ENCODE measurements at regions of chr16 and their contacts with region 1.

Region 1: GRCh38 chr16:84084570-84085270 is 32.0 kb downstream of the MBTPS1 start:
- DNase-seq: no peak
- H3K4me3 ChIP-seq: no peak overlapping the region
- H3K27ac ChIP-seq: no peak overlapping the region
- H3K4me1 ChIP-seq: peaks cover 0 to 9% (median 3%) of the 10 kb centered on the region in 3 donors
- H3K27me3 ChIP-seq: no peaks in the 10 kb centered on the region
- CTCF ChIP-seq: peak; percentile 38 to 73 (median 68)
- POLR2A ChIP-seq: no peak

Region 2: DNA sequence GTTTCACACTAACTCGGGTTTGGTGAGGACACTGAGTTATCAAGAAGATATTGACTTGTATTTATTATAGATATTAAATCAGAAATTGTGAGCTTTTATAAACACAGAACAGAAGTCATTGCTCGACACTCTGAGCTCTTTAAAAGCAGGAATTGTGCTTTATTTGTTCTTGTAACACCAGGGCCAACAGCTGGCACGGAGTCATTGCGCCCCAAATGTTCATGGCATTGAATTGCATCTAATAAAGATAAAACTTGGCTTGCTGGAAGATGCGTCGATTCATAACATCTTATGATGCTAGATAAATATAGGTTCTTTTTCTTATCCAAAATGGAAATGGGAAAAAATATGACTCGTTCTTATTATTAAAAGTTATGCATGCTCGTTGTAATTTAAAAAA is 197.6 kb before region 1 on chr16:
- intact Hi-C with region 1: no loop called
- DNase-seq: no peak
- H3K4me3 ChIP-seq: no peak overlapping the region
- H3K27ac ChIP-seq: no peak overlapping the region
- H3K4me1 ChIP-seq: no peaks in the 10 kb centered on the region
- H3K27me3 ChIP-seq: no peaks in the 10 kb centered on the region
- CTCF ChIP-seq: peak in 1 of 6 experiments; percentile 16
- POLR2A ChIP-seq: no peak

Region 3: DNA sequence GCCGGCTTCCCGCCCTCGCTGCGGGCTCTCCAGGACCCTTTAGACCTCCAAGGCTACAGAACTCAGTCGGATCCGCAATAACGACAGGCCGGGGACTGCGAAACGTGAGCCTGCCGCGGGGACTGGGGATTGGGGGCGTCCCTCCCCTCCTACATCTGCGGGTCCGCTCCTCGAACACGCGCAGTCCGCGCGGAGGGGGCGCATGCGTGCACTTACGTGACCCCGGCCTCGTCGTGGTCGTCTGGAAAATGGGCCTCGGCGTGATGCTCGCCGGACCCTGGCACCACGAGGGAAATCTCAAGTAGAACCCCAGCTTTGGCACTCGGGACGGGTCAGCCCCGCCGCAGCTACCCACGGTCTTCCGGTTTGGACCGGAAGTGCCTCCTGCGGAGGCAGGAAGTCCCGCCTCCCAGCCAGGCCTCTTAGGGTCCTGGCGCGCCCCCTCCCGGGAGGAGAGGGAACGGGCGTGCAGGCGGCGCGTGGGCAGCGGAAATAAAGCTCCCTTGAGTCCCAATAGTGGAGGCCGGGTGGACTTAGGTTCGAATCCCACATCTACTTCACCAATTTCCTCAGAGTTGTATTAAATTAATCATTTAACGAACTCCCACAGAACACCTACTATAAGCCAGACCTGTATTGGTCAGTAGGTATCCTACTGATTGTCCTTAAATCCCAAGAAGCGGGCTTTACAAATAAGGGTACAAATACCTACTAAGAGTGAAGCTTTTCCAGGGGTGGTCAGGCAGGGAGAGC is 102.1 kb after region 1 on chr16 and contains the start of gene TAF1C:
- intact Hi-C with region 1: loop called (anchors 10 kb)
- DNase-seq: peak; percentile 72
- H3K4me3 ChIP-seq: peak within 1 kb of the TSS; percentile 77 to 97 (median 92)
- H3K27ac ChIP-seq: peak within 1 kb of the TSS; percentile 83 to 91 (median 85)
- H3K4me1 ChIP-seq: peaks cover 12 to 41% (median 13%) of the 10 kb centered on the region in 3 donors
- H3K27me3 ChIP-seq: no peaks in the 10 kb centered on the region
- CTCF ChIP-seq: peak; percentile 92 to 99 (median 97)
- POLR2A ChIP-seq: peak in 1 of 4 donors; percentile 49
- total RNA-seq, gene TAF1C: 23.9 to 43.7 (median 32.1) TPM